Caco-2 (cell line): ENCODE measurements at regions of chr4 and their contacts with region 1.

Region 1: DNA sequence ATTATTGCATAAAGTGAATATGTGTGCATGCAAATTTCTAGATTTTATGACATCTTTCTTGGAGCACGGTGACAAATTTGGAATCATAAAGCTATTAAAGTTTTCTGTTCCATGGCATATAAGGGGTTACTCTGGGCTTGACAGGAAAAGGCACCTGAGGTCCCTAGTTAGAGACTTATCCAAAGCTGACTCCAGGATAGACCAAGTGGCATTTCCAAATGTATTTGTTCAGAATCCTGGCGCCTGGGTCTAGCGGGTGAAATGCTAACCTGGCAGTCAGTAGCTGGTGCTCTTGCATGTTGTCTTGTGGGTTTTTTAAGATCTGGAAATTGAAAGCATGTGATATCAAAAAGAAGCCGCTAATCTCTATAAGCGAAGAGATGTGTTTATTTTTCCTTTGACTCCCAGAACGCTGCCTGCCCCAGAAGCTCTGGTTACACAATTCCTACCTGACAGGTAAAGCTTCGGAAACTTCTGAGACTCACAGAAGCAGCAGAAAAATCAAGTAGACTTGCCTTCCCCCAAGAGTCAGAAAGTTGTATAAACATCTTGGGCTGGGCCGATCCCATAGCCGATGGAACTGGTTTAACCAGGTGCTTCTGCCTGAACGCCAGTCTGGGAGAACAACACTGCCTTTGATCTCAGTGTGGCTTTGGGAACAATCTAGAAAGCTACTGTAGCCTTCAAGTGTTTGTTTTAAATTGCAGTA is 12.9 kb upstream of the ZCCHC4 start:
- DNase-seq: peak; percentile 89
- H3K4me3 ChIP-seq: 0 out of 2 replicates have a peak overlapping the region, but pooled peaks have one; percentile 15
- H3K4me3 Mint-ChIP-seq: peak overlapping the region; percentile 76
- H3K27ac Mint-ChIP-seq: peak overlapping the region; percentile 83
- H3K4me1 ChIP-seq: peaks cover 12% of the 10 kb centered on the region
- H3K4me1 Mint-ChIP-seq: peaks cover 19% of the 10 kb centered on the region
- H3K27me3 ChIP-seq: no peaks in the 10 kb centered on the region
- H3K27me3 Mint-ChIP-seq: no peaks in the 10 kb centered on the region
- CTCF ChIP-seq: no peak

Region 2: DNA sequence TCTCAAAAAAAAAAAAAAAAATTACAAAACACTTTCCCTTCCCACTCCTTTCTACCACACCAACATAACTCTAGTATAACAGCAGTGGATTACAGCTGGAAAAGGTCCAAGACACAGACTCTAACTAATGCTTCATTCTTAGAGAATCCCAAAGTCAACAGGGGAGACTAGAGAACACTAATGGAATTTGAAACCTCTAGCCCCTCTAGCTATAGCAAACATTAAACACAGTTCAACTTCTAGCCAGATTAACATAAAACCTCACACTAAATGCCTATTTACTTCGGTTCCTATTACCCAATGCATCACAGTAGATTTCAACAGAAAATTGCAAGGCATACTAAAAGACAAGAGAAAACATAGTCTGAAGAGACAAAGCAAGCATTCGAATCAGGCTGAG is 704.7 kb before region 1 on chr4:
- CTCF ChIA-PET with region 1: interaction called, 3 read pairs
- POLR2A ChIA-PET with region 1: no interaction called
- intact Hi-C with region 1: loop called (anchors 5 kb)
- DNase-seq: peak in 1 of 2 experiments; percentile 66
- H3K4me3 ChIP-seq: no peak overlapping the region
- H3K4me3 Mint-ChIP-seq: peak overlapping the region; percentile 40
- H3K27ac Mint-ChIP-seq: peak overlapping the region; percentile 99
- H3K4me1 ChIP-seq: peaks cover 59% of the 10 kb centered on the region
- H3K4me1 Mint-ChIP-seq: peaks cover 38% of the 10 kb centered on the region
- H3K27me3 ChIP-seq: no peaks in the 10 kb centered on the region
- H3K27me3 Mint-ChIP-seq: no peaks in the 10 kb centered on the region
- CTCF ChIP-seq: no peak

Region 3: DNA sequence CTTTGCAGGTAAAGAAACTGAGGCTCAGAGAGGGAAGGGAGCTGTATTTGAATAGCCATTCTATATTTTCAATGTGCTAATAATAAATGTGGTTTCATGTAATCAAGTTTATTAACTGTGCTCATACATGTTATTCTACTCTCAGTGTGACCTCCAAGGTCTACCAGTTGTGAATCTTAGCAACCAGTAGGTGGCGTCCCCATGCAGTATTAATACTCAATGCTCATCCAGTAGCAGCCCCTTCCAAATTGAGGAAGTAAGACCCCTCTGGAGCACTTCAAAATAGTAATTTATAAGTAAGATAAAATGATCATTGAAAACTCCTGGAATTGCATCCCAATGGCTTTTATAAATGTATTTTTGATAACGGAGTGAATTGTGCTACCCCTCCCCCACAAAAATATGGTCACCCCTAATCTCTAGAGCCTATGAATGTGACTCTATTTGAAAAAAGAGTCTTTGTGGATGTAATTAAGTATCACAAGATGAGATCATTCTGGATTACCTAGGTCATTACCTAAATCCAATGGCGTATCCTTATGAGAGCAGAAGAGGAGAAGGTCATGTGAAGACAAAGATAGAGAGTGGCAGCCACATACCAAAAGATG is 119.0 kb before region 1 on chr4:
- CTCF ChIA-PET with region 1: no interaction called
- POLR2A ChIA-PET with region 1: no interaction called
- intact Hi-C with region 1: loop called (anchors 1 kb)
- DNase-seq: peak; percentile 37 to 39
- H3K4me3 ChIP-seq: no peak overlapping the region
- H3K4me3 Mint-ChIP-seq: no peak overlapping the region
- H3K27ac Mint-ChIP-seq: no peak overlapping the region
- H3K4me1 ChIP-seq: peaks cover 11% of the 10 kb centered on the region; the same call in 1 of the 2 replicates
- H3K4me1 Mint-ChIP-seq: no peaks in the 10 kb centered on the region
- H3K27me3 ChIP-seq: no peaks in the 10 kb centered on the region
- H3K27me3 Mint-ChIP-seq: no peaks in the 10 kb centered on the region
- CTCF ChIP-seq: peak; percentile 56 to 61

Region 4: DNA sequence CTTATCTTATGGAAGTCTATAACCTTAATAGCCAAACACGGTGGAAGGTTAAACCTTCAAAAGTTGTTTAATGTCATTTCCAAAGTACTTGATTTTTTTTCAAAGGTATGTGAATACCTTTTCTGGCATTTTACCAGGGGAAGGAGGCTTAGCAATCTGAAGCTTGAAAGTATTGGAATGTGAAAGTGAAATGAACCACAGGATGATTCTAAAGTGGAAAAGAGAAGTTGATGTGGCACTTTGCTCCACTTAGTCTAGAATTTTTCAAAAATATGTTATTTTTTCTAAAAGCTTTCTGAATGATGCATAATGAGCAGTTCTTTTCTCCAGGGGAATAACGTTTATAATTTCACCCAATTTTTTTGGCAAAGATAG is 46.6 kb before region 1 on chr4:
- CTCF ChIA-PET with region 1: interaction called, 6 read pairs
- POLR2A ChIA-PET with region 1: no interaction called
- intact Hi-C with region 1: loop called (anchors 1 kb)
- DNase-seq: no peak
- H3K4me3 ChIP-seq: no peak overlapping the region
- H3K4me3 Mint-ChIP-seq: no peak overlapping the region
- H3K27ac Mint-ChIP-seq: no peak overlapping the region
- H3K4me1 ChIP-seq: peaks cover 9% of the 10 kb centered on the region
- H3K4me1 Mint-ChIP-seq: peaks cover 10% of the 10 kb centered on the region
- H3K27me3 ChIP-seq: no peaks in the 10 kb centered on the region
- H3K27me3 Mint-ChIP-seq: no peaks in the 10 kb centered on the region
- CTCF ChIP-seq: no peak

Region 5: DNA sequence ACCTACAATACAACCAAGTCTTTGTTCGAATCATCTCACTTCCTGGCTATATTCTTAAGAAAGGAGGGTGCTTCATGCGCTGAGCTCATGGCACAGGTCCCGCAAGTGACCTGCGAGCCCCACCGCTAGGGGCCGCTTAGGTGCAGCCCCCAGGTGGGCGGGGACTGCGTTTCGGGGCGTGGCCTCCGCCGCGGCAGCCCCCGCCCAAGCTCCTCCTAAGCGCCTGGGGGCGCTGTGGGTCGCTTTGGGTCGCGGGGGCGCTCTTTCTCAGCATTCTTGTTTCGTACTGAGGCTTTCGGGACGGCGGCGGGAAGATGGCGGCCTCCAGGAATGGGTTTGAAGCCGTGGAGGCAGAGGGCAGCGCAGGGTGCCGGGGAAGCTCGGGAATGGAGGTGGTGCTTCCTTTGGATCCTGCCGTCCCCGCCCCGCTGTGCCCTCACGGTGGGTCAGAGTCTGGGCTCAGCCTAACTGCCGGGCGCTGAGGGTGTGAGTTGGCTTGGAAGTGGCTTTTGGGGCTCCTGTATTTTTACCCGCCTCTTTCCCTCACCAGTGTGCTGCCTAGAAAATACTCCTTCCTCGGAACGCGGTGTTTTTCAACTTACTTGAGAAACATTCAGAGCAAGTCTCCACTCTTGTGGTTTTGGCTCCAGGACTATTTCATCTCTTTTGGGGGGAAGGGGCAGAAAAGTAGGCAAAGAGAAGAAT is 13.0 kb after region 1 on chr4 and contains the start of gene ZCCHC4:
- CTCF ChIA-PET with region 1: interaction called, 30 read pairs
- POLR2A ChIA-PET with region 1: interaction called, 17 read pairs
- intact Hi-C with region 1: loop called (anchors 1 kb)
- DNase-seq: peak; percentile 84 to 90
- H3K4me3 ChIP-seq: peak within 1 kb of the TSS; percentile 78
- H3K4me3 Mint-ChIP-seq: peak within 1 kb of the TSS; percentile 98
- H3K27ac Mint-ChIP-seq: peak within 1 kb of the TSS; percentile 100
- H3K4me1 ChIP-seq: peaks cover 15% of the 10 kb centered on the region
- H3K4me1 Mint-ChIP-seq: peaks cover 7% of the 10 kb centered on the region
- H3K27me3 ChIP-seq: no peaks in the 10 kb centered on the region
- H3K27me3 Mint-ChIP-seq: no peaks in the 10 kb centered on the region
- CTCF ChIP-seq: peak; percentile 88 to 97
- total RNA-seq, gene ZCCHC4: 13.1 and 13.2 TPM in 2 replicates